ENCODE measurements at regions of chr14 and their contacts with region 1.

Region 1: DNA sequence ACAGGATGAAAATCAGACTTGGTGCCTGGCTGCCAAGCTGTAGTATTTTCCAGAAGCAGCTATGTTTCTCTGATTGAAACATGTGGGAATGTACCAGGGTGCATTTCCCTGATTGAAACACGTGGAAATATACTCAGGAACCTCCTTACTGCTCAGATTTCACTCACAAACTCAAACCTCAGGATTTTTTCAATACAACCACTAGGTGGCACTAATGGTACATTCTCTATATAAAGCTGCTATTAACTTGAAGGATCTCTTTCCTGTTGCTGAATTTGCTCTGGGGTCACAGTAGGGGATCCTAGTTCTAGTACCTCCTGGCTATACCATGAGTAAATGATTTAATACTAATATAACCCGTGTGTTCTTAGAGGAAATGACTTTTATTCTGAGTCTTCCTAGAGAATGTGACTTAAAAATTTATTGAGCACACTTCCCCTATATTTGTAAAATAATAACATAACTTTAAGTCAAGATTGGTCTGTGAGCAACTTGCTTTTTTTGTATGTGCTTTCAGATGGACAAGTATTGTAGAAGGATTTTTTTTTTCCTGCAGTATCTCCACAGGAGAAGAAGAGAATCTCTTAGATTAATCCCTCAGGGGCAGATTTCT is 173.8 kb upstream of the MIS18BP1 start:
- DNase-seq: no peak
- H3K4me3 ChIP-seq: no peak overlapping the region
- H3K27ac ChIP-seq: no peak overlapping the region
- H3K4me1 ChIP-seq: no peaks in the 10 kb centered on the region
- H3K27me3 ChIP-seq: no peaks in the 10 kb centered on the region
- CTCF ChIP-seq: peak; percentile 45

Region 2: GRCh38 chr14:45284802-45285201 is 142.0 kb before region 1 on chr14:
- intact Hi-C with region 1: no loop called
- DNase-seq: no peak
- H3K4me3 ChIP-seq: no peak overlapping the region
- H3K27ac ChIP-seq: no peak overlapping the region
- H3K4me1 ChIP-seq: no peaks in the 10 kb centered on the region
- H3K27me3 ChIP-seq: no peaks in the 10 kb centered on the region
- CTCF ChIP-seq: no peak

Region 3: GRCh38 chr14:46091819-46092218 is 665.0 kb after region 1 on chr14:
- intact Hi-C with region 1: no loop called
- DNase-seq: no peak
- H3K4me3 ChIP-seq: no peak overlapping the region
- H3K27ac ChIP-seq: no peak overlapping the region
- H3K4me1 ChIP-seq: no peaks in the 10 kb centered on the region
- H3K27me3 ChIP-seq: no peaks in the 10 kb centered on the region
- CTCF ChIP-seq: no peak

Region 4: DNA sequence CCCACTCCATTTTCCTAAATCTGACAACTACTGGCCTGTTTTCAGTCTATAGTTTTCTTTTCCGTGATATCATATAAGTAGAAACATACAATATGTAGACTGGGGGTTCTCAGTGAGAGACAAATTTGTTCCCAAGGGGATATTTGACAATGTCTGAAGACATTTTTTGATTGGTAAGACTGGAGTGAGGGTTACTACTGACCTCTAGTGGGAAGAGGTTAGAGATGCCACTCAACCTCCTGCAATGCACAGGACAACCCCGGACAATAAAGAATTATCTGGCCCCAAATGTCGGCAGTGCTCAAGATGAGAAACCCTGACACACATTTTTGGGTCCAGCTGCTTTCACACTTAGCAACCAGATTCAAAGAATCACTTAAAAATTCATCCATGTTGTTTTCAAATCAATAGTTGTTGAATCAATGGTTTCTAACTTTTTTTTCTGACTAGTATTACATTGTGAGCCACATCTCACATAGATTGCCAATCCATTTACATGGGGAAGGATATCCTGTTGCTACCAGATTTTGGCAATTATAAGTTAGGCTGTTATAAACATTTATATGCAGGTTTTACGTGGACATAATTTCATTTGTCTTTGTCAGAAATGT is 917.7 kb after region 1 on chr14:
- intact Hi-C with region 1: loop called (anchors 10 kb)
- DNase-seq: no peak
- H3K4me3 ChIP-seq: no peak overlapping the region
- H3K27ac ChIP-seq: no peak overlapping the region
- H3K4me1 ChIP-seq: no peaks in the 10 kb centered on the region
- H3K27me3 ChIP-seq: no peaks in the 10 kb centered on the region
- CTCF ChIP-seq: peak; percentile 35

Measured in colonic mucosa (tissue), 4 donors.